Activated CD4-positive, alpha-beta memory T cell treated with anti-CD3 and anti-CD28 coated beads, Interleukin-2, amount 10 ng/mL, durations not matched to agents 7 days and 5 days (primary cell): ENCODE measurements at regions of chr12 and their contacts with region 1.

Region 1: GRCh38 chr12:56359851-56360767 is at the start of gene STAT2:
- DNase-seq: peak; percentile 100
- H3K4me3 Mint-ChIP-seq: peak within 1 kb of the TSS; percentile 93
- H3K27ac Mint-ChIP-seq: peak within 1 kb of the TSS; percentile 90
- H3K4me1 Mint-ChIP-seq: peaks cover 28% of the 10 kb centered on the region
- H3K27me3 Mint-ChIP-seq: no peaks in the 10 kb centered on the region
- total RNA-seq, gene STAT2: 298 to 304 TPM

Region 2: DNA sequence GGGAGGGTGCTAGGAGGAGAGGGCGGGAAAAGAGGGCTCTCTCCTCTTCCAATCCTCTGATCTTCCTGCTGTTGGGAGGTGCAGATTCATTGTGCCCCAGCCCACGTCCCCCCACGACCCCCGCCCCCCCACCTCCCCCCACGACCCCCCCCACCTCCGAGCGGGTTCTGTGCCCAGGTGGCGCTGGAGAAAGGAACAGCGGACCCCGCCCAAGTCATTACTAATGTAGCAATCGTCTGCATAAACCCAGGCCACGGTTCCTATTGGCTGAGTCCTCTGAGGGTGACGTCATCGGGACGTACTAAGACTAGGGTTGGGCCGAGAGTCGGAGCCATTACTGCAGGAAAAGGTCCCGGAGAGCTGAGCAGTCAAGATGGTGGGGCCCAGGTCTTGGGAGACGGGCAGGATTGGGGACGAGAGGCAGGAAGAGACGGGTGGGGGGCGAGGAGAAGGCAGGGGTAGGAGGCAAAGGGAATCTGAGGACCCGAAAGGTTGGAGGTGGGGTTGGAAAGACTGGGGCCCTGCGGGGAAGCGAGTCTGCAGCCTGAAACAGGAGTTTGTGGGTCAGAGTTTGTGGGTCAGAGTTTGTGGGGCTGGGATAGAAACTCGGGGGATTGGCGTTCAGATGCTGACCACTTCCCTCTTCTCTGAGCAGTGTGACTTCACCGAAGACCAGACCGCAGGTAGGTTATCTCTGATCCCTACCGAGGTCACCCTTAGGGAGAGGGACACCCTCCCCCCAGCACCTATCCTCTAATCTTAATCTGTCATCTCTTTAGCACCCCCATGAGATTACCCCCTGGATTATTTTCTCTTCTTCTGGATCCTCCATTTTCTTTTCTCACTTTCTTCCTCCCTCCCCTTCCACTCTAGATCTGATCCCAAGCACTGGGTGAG is 201.8 kb before region 1 on chr12 and contains the start of gene MYL6:
- CTCF ChIA-PET with region 1: interaction called, 4 read pairs
- POLR2A ChIA-PET with region 1: interaction called, 11 read pairs
- DNase-seq: peak; percentile 94
- H3K4me3 Mint-ChIP-seq: peak within 1 kb of the TSS; percentile 91
- H3K27ac Mint-ChIP-seq: peak within 1 kb of the TSS; percentile 90
- H3K4me1 Mint-ChIP-seq: peaks cover 59% of the 10 kb centered on the region
- H3K27me3 Mint-ChIP-seq: no peaks in the 10 kb centered on the region
- total RNA-seq, gene MYL6: 1,594 to 1,602 TPM

Region 3: DNA sequence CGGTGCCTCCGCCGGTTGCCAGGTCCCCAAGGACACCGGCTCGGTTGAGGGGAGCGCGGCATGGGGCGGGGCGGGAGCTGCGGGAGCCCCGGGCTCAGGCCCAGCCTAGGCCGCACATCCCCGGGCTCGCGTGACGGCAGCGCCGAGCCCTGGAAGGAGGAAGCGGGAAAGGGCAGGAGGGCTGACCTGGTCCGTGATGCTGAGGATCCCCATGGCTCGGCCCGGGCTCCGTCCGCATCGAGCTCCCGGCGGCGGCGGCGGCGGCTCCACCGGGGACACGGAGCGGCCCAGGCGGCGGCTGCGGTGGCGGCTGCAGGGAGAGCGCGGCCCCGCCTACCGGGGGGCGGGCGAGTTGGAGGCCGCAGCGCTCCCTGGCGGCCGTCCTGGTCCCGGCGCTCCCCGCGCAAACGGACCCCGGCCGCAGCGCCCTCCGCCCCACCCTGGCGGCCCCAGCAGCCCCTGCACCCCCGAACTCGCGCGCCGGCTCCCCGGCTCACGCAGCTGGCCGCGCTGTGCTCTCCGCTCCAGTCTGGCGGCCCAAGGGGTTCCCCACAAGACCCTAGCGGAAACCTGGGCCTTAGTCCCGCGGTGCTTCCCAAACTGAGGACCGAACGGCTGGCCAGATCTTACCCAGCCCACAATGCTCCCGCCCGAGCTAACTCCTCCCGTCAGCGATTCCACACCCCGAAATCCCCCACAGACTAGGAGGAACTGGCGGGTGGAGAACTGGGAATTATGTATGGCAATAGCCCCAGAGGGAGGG is 101.9 kb before region 1 on chr12 and contains the start of gene ANKRD52:
- CTCF ChIA-PET with region 1: no interaction called
- POLR2A ChIA-PET with region 1: interaction called, 12 read pairs
- DNase-seq: peak; percentile 80
- H3K4me3 Mint-ChIP-seq: peak within 1 kb of the TSS; percentile 91
- H3K27ac Mint-ChIP-seq: peak within 1 kb of the TSS; percentile 76
- H3K4me1 Mint-ChIP-seq: peaks cover 22% of the 10 kb centered on the region
- H3K27me3 Mint-ChIP-seq: no peaks in the 10 kb centered on the region
- total RNA-seq, gene ANKRD52: 46.4 to 50.1 TPM

Region 4: GRCh38 chr12:56315622-56316473 is 44.3 kb before region 1 on chr12 and contains the start of gene CNPY2:
- CTCF ChIA-PET with region 1: interaction called, 12 read pairs
- POLR2A ChIA-PET with region 1: interaction called, 66 read pairs
- DNase-seq: peak; percentile 94
- H3K4me3 Mint-ChIP-seq: peak within 1 kb of the TSS; percentile 96
- H3K27ac Mint-ChIP-seq: peak within 1 kb of the TSS; percentile 94
- H3K4me1 Mint-ChIP-seq: peaks cover 21% of the 10 kb centered on the region
- H3K27me3 Mint-ChIP-seq: no peaks in the 10 kb centered on the region
- total RNA-seq, gene CNPY2: 95.0 to 99.3 TPM

Region 5: GRCh38 chr12:56346703-56347102 is 13.4 kb before region 1 on chr12:
- CTCF ChIA-PET with region 1: interaction called, 7 read pairs
- POLR2A ChIA-PET with region 1: interaction called, 113 read pairs
- DNase-seq: no peak
- H3K4me3 Mint-ChIP-seq: no peak overlapping the region
- H3K27ac Mint-ChIP-seq: no peak overlapping the region
- H3K4me1 Mint-ChIP-seq: peaks cover 2% of the 10 kb centered on the region
- H3K27me3 Mint-ChIP-seq: no peaks in the 10 kb centered on the region

Region 6: GRCh38 chr12:56398324-56398723 is 38.2 kb after region 1 on chr12:
- CTCF ChIA-PET with region 1: no interaction called
- POLR2A ChIA-PET with region 1: no interaction called
- DNase-seq: no peak
- H3K4me3 Mint-ChIP-seq: no peak overlapping the region
- H3K27ac Mint-ChIP-seq: no peak overlapping the region
- H3K4me1 Mint-ChIP-seq: no peaks in the 10 kb centered on the region
- H3K27me3 Mint-ChIP-seq: peaks cover 3% of the 10 kb centered on the region

Region 7: DNA sequence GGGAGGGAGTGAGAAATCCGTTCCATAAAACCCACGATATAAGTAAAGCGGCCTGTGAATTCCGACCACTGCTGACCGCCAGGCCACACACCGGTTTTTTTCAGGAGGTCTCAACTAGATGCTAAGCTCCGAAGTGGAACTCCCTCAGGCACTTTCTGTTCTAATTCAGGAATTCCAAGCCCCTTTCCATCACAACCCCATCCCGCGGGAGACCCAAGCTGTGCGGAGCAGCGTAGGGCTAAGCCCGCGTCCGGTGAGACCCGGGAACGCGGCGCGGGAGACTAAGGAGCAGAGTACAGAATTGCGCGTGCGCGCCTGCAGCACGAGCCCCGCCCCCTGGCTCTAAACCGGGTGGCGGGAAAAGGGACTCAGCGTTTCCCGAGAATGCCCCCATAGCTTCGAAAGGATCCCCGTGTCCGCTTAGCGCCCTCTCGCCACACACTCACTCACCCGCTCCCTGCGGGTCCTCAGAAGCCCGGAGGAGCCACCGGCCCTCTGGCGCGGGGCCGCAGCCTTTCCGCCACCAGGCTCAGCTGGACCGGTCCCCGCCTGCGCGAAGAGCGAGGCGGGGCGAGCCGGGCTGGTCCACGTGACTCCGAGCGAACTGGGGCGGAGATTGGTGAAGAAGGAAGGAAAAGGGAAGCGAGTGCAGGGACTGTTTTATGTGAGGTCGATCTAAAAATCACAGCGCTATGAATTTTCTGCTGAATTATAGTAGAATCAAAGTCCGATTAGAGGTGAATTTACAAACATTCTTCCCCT is 88.9 kb after region 1 on chr12 and contains the start of gene TIMELESS:
- CTCF ChIA-PET with region 1: interaction called, 6 read pairs
- POLR2A ChIA-PET with region 1: interaction called, 50 read pairs
- DNase-seq: peak; percentile 87
- H3K4me3 Mint-ChIP-seq: peak within 1 kb of the TSS; percentile 89
- H3K27ac Mint-ChIP-seq: peak within 1 kb of the TSS; percentile 81
- H3K4me1 Mint-ChIP-seq: peaks cover 36% of the 10 kb centered on the region
- H3K27me3 Mint-ChIP-seq: peaks cover 4% of the 10 kb centered on the region
- total RNA-seq, gene TIMELESS: 44.1 to 45.6 TPM

Region 8: DNA sequence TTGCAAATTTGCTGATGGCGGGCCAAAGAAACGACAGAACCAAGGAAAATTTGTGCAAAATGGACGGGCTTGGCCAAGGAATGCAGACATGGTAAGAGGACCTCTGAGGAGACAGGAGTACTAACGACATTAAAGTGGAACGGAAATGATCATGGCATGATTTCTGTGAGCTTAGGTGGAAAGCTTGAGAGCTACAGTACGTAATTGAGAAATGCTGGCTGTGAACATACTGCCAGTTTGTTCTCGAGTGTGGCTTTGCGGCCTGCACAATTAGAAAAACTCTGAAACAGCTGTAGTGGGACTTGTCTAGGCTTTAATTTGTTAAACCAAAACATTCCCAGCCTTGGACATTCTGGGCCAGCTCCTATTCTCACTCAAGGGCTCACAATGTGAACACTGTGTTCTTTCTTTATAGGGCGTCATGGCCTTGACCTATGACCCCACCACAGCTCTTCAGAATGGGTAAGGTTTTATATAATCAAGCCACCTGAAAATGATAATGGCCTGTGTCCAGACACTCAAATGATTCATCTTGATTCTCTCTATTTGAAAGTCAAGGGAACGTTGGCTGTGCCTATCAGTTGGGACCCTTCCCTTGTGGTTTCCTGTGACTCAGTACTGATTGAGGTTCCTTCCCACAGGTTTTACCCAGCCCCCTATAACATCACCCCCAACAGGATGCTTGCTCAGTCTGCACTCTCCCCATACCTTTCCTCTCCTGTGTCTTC is 221.5 kb after region 1 on chr12:
- CTCF ChIA-PET with region 1: no interaction called
- POLR2A ChIA-PET with region 1: no interaction called
- DNase-seq: peak; percentile 32
- H3K4me3 Mint-ChIP-seq: no peak overlapping the region
- H3K27ac Mint-ChIP-seq: peak overlapping the region; percentile 44
- H3K4me1 Mint-ChIP-seq: peaks cover 28% of the 10 kb centered on the region
- H3K27me3 Mint-ChIP-seq: no peaks in the 10 kb centered on the region